H1 (cell line): ENCODE measurements at regions of chr7 and their contacts with region 1.

Region 1: GRCh38 chr7:6026011-6026819 is 5.0 kb upstream of the ANKRD61 start:
- DNase-seq: peak; percentile 29 to 75
- H3K4me3 ChIP-seq: no peak overlapping the region
- H3K27ac ChIP-seq: no peak overlapping the region
- H3K4me1 ChIP-seq: no peaks in the 10 kb centered on the region
- H3K27me3 ChIP-seq: no peaks in the 10 kb centered on the region
- CTCF ChIP-seq: peak; percentile 64 to 69 (median 66)
- EP300 ChIP-seq: no peak
- POLR2A ChIP-seq: no peak
- RAD21 ChIP-seq: peak; percentile 61 to 63

Region 2: GRCh38 chr7:5997222-5997808 is 28.9 kb before region 1 on chr7:
- CTCF ChIA-PET with region 1: interaction called, 15 read pairs
- POLR2A ChIA-PET with region 1: interaction called, 9 read pairs
- DNase-seq: no peak
- H3K4me3 ChIP-seq: no peak overlapping the region
- H3K27ac ChIP-seq: no peak overlapping the region
- H3K4me1 ChIP-seq: no peaks in the 10 kb centered on the region
- H3K27me3 ChIP-seq: no peaks in the 10 kb centered on the region
- CTCF ChIP-seq: peak; percentile 9 to 42 (median 30); a peak in 3 of 4 replicates
- EP300 ChIP-seq: no peak
- POLR2A ChIP-seq: no peak
- RAD21 ChIP-seq: peak; percentile 60 to 61

Region 3: GRCh38 chr7:6008668-6009611 is 17.3 kb before region 1 on chr7 and contains the starts of genes AIMP2 and PMS2:
- CTCF ChIA-PET with region 1: interaction called, 31 read pairs
- POLR2A ChIA-PET with region 1: interaction called, 66 read pairs
- DNase-seq: peak; percentile 93 to 95
- H3K4me3 ChIP-seq: peak within 1 kb of the TSS; percentile 53 to 86 (median 77)
- H3K27ac ChIP-seq: peak within 1 kb of the TSS; percentile 96
- H3K4me1 ChIP-seq: peaks cover 0 to 3% (median 0%) of the 10 kb centered on the region in 4 experiments; a peak in 1 of 7 replicates
- H3K27me3 ChIP-seq: no peaks in the 10 kb centered on the region
- CTCF ChIP-seq: no peak
- EP300 ChIP-seq: no peak
- POLR2A ChIP-seq: peak; percentile 93 to 99
- RAD21 ChIP-seq: no peak
- total RNA-seq, gene AIMP2: 82.4 and 85.6 TPM in 2 replicates
- total RNA-seq, gene PMS2: 11.1 and 12.1 TPM in 2 replicates

Region 4: DNA sequence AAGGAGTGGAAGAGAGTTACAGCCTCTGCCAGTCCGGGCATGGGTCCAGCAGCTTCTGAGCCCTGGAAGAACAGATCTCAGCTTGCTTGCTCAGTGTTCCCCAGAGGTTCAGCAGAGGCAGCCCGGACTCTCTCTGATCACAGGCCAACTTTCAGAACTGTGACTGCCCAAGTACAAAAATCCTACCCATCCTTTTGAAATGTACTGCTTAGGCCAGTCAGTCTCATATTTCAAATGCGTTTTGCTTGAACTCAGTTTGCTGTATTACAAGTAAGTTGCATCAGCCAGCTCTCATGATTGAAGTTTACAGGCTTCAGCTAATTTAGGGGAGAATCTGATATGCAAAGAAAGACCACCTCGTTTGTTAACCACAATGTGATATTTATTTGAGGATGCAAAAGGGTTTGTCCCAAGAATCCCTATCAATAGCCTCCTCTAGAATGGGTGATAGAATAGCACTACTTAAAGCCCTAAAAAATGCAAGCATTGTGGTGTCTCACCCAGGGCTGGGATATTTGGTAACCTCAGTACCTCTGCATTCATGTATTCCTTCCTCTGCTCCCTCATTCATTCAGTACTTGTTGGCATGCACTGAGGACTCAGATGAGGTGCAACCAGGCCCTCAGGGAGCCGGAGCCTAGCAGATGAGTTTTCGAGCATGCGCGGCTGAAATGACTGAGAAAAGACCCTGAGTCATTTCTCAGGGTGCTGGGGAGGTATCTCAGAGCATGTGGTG is 10.1 kb before region 1 on chr7:
- CTCF ChIA-PET with region 1: interaction called, 31 read pairs
- POLR2A ChIA-PET with region 1: interaction called, 66 read pairs
- DNase-seq: no peak
- H3K4me3 ChIP-seq: no peak overlapping the region
- H3K27ac ChIP-seq: no peak overlapping the region
- H3K4me1 ChIP-seq: peaks cover 0 to 1% (median 0%) of the 10 kb centered on the region in 4 experiments; a peak in 1 of 7 replicates
- H3K27me3 ChIP-seq: no peaks in the 10 kb centered on the region
- CTCF ChIP-seq: no peak
- EP300 ChIP-seq: no peak
- POLR2A ChIP-seq: no peak
- RAD21 ChIP-seq: no peak